GM13976 (cell line): ENCODE measurements at regions of chr21 and their contacts with region 1.

Region 1: DNA sequence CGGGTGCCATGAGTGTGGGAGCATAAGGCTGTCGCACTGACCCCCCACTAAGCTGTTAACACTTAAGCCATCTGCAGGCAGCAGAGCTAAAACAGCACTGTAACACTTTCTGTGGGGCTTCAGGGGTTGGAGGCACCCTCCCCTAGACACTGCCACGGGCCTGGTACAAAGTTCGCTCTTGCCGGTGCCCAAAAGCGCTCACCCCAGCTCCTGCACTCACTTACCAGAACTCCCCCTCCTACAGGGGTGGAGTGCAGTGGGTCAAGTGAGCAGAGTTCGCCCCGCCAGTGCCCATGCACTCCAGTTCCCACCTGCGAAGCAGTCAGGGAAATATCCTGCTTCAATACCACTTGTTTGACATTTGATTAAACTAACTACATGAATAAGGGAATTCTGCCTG is 46.3 kb upstream of the CFAP298 start:
- DNase-seq: no peak
- CTCF ChIP-seq: no peak

Region 2: DNA sequence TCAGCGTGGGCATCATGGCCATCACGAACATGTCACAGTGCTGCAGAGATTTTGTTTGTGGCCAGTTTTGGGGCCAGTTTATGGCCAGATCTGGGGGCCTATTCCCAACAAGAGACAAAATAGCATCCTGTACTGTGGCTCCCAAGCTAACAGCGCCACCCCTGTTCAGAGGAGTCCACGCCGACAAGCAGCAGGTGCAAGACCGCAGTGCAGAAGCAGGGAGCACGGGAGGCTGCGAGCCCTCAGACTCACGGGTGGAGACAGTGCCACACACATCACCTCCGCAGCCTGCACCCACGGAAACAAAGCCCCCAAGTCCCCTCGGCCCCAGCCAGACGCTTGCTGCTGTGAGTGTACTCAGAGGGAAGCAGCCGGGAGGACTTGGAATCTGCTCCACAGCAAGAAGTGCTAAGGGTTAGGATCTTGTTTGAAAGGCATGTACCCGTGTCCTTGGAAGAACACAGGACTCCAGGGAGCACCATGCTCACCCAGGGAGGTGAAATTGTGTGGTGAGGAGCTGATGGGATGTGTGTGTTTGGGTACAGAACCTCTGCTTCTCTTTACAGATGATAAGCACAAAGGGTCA is 80.3 kb before region 1 on chr21:
- in situ Hi-C with region 1: no loop called
- DNase-seq: no peak
- CTCF ChIP-seq: no peak

Region 3: GRCh38 chr21:32819694-32820093 is 161.2 kb after region 1 on chr21:
- in situ Hi-C with region 1: loop called (anchors 5 kb)
- DNase-seq: no peak
- CTCF ChIP-seq: no peak